Sciatic nerve (tissue), 2 donors: ENCODE measurements at regions of chr2 and their contacts with region 1.

Region 1: DNA sequence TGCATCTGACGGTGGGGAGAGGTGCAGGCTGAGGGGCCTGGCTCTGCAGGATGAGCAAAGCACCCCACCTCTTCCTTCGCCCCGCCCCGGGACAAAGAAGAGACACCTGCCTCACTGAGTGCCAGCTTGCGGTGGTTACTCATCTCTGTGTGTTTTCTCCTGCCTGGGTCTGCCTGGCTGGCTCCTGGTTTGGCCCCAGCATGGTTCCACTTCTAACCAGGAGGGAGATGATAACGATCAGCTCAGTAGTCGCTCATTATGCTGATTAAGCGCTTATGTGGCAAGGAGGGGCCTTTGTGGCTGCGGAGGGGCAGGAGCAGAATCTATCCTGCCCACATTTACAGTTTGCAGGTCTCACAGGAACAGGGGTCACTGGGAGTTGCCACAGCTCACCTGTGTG is 68.7 kb upstream of the EDAR start:
- DNase-seq: no peak
- ATAC-seq: no peak

Region 2: DNA sequence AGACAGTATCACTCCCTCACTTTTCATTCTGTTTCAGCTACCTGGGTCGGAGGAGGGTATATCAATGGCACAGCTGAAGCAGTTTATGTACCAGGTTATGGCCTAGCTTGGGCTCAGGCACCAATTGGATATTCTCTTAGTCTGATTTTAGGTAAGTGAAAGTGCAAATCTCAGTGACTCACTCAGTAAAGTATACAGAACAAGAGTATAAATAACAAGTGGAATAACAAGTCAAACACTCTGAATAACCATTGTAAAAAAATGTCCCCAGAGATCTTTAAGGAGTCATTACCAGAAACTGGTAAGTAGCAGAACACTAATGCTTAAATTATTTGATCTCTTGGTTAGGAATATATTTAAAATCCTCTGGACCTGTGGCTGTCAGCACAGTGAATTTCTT is 1065.6 kb before region 1 on chr2:
- intact Hi-C with region 1: loop called (anchors 5 kb)
- DNase-seq: no peak
- ATAC-seq: no peak

Region 3: GRCh38 chr2:109005686-109006204 is 51.9 kb before region 1 on chr2:
- intact Hi-C with region 1: no loop called
- DNase-seq: no peak
- ATAC-seq: peak; percentile 36

Region 4: GRCh38 chr2:109089602-109090300 is 32.1 kb after region 1 on chr2:
- intact Hi-C with region 1: no loop called
- DNase-seq: no peak
- ATAC-seq: no peak

Region 5: DNA sequence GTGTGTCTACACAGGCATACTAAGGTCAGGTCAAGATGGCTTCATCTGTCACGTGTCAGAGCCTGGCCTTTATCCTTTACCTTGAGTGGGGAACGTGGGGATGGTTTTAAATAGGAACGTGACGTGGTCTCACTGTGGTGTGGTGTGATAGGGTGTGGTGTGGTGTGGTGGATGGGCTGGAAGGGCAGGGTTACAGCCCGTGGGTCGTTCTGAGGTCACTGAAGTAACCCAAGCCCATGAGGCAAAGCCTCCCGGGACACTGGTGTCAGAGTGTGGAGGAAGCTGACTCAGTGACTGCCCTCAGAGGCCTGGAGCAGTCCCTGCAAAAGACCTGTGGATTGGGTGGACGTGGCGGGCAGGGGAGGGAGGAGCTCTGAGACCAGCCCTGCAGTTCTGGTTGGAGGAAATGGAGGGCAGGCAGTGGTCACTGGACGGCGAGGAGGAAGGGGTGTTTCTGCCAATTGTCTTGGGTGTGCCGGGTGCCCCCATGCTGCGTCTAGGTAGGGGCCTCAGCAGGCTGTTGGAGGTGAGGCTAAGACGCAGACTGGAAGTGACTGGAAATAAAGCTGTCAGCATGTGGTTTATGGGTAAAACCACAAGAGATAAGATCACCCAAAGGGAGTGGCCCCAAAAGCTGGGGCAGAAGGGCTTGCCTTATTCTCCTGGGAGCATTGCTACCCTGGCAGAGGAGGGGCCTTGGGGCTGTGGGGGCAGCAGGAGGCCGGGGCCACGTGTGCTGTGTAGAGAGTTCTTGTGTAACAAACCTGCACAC is 156.1 kb after region 1 on chr2:
- intact Hi-C with region 1: no loop called
- DNase-seq: peak; percentile 57
- ATAC-seq: peak; percentile 5